Prostate gland (tissue), 2 donors: ENCODE measurements at regions of chr11 and their contacts with region 1.

Region 1: DNA sequence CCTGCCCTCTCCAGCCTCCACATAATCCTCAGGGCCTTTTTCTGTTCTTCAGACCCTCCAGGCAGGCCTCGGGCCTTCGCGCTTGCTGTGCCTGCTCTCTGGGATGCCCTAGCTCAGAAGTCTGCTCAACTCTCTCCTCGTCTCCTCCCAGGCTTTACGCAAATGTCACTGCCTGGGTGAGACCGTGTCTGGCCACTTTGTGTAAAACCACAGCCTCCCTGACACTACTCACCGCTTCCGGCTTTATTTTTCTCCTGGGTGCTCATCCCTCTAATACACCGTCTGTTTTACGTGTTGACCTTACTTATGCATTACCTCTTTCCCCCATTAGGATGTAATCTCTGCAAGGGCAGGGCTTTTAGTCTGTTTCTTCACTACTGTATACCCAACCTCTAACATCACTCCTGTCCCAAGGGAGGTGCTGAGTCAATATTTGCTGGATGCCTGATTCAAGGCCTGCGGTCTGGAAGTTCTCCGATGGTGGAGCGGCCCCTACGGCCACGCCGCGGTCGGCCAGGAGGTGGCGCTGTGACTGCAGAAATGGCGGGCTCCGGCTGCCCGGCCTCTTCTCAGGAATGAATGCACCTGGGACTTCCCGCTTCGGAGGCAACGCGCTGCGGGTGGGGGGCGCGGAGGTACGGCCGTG is 58.2 kb upstream of the THY1 start:
- DNase-seq: peak; percentile 86
- H3K4me3 ChIP-seq: no peak overlapping the region
- H3K27ac ChIP-seq: no peak overlapping the region
- H3K4me1 ChIP-seq: no peaks in the 10 kb centered on the region
- H3K27me3 ChIP-seq: no peaks in the 10 kb centered on the region
- CTCF ChIP-seq: peak; percentile 98 to 99 (median 98)
- POLR2A ChIP-seq: no peak

Region 2: GRCh38 chr11:119533921-119534736 is 53.0 kb after region 1 on chr11:
- intact Hi-C with region 1: loop called (anchors 5 kb)
- DNase-seq: peak; percentile 53
- H3K4me3 ChIP-seq: no peak overlapping the region
- H3K27ac ChIP-seq: no peak overlapping the region
- H3K4me1 ChIP-seq: no peaks in the 10 kb centered on the region
- H3K27me3 ChIP-seq: no peaks in the 10 kb centered on the region
- CTCF ChIP-seq: peak; percentile 52 to 69 (median 60)
- POLR2A ChIP-seq: no peak

Region 3: DNA sequence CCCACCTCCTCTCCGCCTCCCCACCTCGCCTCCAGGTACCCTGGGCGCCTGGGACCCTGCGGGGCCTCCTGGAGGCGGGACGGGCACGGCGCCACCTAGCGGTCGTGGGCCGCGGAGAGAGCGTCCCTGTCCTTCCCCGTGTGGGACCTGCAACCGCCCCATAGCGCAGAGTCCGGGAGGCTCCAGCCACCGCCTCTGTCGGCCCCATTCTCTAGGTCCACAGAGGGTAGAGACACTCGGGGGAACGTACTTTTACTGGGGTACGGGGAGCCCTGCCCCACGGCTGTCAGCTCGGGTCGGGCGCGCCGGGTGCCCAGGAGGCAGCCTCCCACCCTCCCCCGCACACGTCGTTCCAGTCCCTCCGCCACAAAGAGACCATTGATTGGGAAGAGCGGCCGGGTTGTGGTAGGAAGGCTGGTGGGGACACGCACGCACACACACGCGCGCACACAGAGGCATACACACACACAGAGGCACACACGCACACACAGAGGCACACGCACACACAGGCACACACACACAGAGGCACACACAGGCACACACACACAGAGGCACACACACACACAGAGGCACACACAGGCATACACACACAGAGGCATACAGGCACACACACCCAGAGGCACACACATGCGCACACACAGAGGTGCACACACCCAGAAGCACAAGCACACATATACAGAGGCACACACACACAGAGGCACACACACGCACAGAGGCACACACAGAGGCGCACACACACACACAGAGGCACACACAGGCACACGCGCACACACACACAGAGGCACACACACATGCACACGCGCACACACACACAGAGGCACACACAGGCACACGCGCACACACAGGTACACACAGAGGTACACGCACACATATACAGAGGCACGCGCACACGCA is 260.5 kb after region 1 on chr11:
- intact Hi-C with region 1: loop called (anchors 5 kb)
- DNase-seq: no peak
- H3K4me3 ChIP-seq: no peak overlapping the region
- H3K27ac ChIP-seq: no peak overlapping the region
- H3K4me1 ChIP-seq: peaks cover 3% of the 10 kb centered on the region
- H3K27me3 ChIP-seq: no peaks in the 10 kb centered on the region
- CTCF ChIP-seq: peak; percentile 50 to 85 (median 66)
- POLR2A ChIP-seq: no peak

Region 4: DNA sequence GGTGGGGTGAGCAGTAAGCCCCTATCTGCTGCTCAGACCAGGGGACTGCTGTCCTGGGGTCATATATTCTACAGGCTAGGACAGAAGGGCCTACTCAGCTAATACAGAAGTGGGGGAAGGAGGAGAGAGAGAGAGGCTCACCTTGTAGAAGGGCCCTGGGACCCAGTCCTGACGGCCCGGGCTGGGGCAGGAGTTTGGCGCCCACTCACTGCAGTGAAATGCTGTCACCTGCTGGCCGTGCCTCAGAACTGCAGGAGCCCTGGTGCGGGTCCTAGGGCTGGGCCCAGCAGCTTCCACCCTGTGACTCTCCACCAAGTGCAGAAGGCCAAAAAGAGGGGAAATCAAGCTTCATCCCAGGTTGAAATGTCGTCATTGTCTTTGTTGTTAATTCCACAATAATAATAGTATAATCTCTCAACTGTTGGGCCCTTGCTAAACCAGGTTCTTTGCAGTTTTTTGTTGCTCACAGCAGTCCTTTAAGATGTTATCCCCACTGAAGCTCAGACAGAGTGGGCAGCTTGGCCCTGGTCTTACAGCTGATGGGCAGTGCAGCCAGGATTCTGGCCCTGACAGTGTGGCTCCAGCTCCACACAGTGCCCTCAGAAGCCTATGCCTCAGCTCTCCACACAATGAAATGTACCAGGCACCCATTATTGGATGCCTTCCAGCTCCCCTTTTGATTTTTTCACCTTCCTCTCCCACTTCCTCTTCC is 627.2 kb after region 1 on chr11:
- intact Hi-C with region 1: loop called (anchors 2 kb)
- DNase-seq: peak; percentile 67
- H3K4me3 ChIP-seq: no peak overlapping the region
- H3K27ac ChIP-seq: peak overlapping the region in 1 of 2 donors; percentile 2
- H3K4me1 ChIP-seq: no peaks in the 10 kb centered on the region
- H3K27me3 ChIP-seq: no peaks in the 10 kb centered on the region
- CTCF ChIP-seq: peak; percentile 92 to 99 (median 98)
- POLR2A ChIP-seq: no peak